Panc1 (cell line): ENCODE measurements at regions of chr11 and their contacts with region 1.

Region 1: DNA sequence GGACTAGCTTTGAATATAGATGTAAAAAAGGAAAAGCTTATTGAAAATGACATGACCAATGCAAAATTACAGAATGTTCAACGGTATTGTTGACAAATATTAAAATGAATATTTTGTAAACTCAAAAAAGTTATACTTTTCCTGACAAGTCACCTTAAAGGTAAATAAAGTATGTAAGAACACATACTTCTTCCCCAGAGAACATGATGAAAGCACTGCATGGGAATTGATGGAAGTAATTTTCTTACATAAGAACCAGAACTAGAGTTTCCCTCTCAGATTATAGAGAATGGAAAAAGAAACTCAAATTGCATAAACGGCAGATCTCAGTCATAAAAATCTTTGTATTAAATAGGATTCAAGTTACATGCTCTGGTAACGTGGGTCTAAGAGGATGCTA is at the start of gene OR4P4:
- DNase-seq: no peak
- ATAC-seq: no peak
- H3K4me3 ChIP-seq: no peak within 1 kb of the TSS
- H3K27ac ChIP-seq: no peak within 1 kb of the TSS
- H3K4me1 ChIP-seq: no peaks in the 10 kb centered on the region
- H3K27me3 ChIP-seq: no peaks in the 10 kb centered on the region
- CTCF ChIP-seq: no peak
- total RNA-seq, gene OR4P4: not detected

Region 2: GRCh38 chr11:55349032-55349431 is 285.8 kb before region 1 on chr11:
- CTCF ChIA-PET with region 1: no interaction called
- POLR2A ChIA-PET with region 1: no interaction called
- in situ Hi-C with region 1: no loop called
- intact Hi-C with region 1: no loop called
- DNase-seq: no peak
- ATAC-seq: no peak
- H3K4me3 ChIP-seq: no peak overlapping the region
- H3K27ac ChIP-seq: no peak overlapping the region
- H3K4me1 ChIP-seq: no peaks in the 10 kb centered on the region
- H3K27me3 ChIP-seq: no peaks in the 10 kb centered on the region
- CTCF ChIP-seq: no peak

Region 3: GRCh38 chr11:55503449-55503848 is 131.4 kb before region 1 on chr11:
- CTCF ChIA-PET with region 1: no interaction called
- POLR2A ChIA-PET with region 1: no interaction called
- in situ Hi-C with region 1: no loop called
- intact Hi-C with region 1: loop called (anchors 10 kb)
- DNase-seq: no peak
- ATAC-seq: no peak
- H3K4me3 ChIP-seq: no peak overlapping the region
- H3K27ac ChIP-seq: no peak overlapping the region
- H3K4me1 ChIP-seq: no peaks in the 10 kb centered on the region
- H3K27me3 ChIP-seq: no peaks in the 10 kb centered on the region
- CTCF ChIP-seq: peak; percentile 25

Region 4: GRCh38 chr11:55624531-55624930 is 10.3 kb before region 1 on chr11:
- CTCF ChIA-PET with region 1: no interaction called
- POLR2A ChIA-PET with region 1: no interaction called
- in situ Hi-C with region 1: no loop called
- intact Hi-C with region 1: no loop called
- DNase-seq: no peak
- ATAC-seq: no peak
- H3K4me3 ChIP-seq: no peak overlapping the region
- H3K27ac ChIP-seq: no peak overlapping the region
- H3K4me1 ChIP-seq: no peaks in the 10 kb centered on the region
- H3K27me3 ChIP-seq: no peaks in the 10 kb centered on the region
- CTCF ChIP-seq: no peak